ENCODE measurements at regions of chr1 and their contacts with region 1.

Region 1: DNA sequence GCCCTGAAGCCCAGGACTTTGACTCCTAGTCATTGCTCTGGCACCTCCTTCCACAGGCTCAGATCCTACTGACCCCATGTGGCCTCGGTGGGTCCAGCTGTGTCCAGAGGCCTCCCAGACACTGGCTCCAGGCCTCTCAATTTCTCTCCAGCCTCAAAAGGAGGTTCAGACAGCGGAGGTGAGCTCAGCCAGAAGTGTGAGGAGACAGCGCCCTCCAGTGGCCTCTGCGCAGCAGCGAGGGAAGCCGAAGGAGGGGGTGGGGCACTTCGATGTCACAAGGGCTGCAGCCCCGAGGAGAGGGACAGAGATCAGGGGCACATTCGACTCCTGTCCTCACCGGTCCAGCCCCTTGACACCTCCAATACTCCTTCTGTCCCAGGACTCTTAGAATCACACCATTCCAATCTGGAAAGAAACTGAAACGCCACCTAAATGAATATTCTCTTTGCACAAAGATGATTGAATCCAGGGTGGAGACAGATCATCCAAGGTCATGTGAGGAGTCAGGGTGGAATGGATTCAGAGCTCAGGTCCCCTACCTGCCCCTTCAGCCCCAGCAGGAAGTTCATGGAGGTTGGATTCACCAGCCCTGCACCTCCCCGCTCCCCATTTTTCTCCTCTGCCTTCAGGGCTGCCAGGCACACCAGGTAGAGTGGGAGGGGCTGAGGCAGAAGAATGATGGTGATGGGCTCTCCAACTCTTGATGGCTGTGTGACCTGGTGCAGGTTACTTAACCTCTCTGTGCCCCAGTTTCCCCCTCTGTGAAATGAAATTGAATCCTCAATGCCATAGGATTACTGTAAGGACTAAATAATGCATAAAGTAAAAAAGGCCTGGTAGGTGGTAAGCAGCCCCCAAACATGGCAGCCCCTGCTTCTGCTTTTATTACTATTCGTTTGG is 34.8 kb upstream of the ZBTB40 start:
- H3K4me3 Mint-ChIP-seq: no peak overlapping the region
- H3K27ac Mint-ChIP-seq: no peak overlapping the region
- H3K4me1 Mint-ChIP-seq: no peaks in the 10 kb centered on the region
- H3K27me3 Mint-ChIP-seq: peaks cover 37% of the 10 kb centered on the region

Region 2: DNA sequence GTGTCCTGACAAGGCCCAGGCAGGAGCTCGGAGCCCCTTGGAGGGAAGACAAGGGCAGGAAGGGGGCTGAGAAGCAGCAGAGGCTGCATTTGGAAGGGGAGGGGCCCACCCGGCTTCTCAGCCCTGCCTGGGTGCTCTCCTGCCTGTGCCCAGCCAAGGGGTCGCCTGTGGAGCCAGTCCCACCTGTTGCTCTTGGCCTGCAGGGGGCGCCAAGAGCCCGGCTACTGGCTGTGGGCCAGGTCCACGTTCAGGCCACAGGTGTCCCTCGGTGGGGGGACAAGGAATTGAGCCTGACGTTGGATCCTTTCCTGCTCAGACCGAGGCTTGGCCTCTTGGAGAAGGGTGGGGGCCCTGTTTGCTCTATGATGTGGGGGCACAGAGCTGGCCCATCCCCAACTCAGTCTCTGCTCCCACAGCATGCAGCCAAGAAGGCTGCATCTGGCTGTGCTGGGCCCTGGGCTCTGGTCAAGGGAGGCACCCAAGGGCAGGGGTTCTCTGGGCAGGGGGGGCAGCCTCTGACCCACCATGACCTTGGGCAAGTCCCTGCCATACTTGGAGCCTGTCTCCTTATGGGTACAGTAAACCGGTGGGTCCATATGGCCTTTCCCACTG is 284.8 kb before region 1 on chr1:
- intact Hi-C with region 1: loop called (anchors 2 kb)
- H3K4me3 Mint-ChIP-seq: no peak overlapping the region
- H3K27ac Mint-ChIP-seq: no peak overlapping the region
- H3K4me1 Mint-ChIP-seq: no peaks in the 10 kb centered on the region
- H3K27me3 Mint-ChIP-seq: peaks cover 20% of the 10 kb centered on the region

Region 3: DNA sequence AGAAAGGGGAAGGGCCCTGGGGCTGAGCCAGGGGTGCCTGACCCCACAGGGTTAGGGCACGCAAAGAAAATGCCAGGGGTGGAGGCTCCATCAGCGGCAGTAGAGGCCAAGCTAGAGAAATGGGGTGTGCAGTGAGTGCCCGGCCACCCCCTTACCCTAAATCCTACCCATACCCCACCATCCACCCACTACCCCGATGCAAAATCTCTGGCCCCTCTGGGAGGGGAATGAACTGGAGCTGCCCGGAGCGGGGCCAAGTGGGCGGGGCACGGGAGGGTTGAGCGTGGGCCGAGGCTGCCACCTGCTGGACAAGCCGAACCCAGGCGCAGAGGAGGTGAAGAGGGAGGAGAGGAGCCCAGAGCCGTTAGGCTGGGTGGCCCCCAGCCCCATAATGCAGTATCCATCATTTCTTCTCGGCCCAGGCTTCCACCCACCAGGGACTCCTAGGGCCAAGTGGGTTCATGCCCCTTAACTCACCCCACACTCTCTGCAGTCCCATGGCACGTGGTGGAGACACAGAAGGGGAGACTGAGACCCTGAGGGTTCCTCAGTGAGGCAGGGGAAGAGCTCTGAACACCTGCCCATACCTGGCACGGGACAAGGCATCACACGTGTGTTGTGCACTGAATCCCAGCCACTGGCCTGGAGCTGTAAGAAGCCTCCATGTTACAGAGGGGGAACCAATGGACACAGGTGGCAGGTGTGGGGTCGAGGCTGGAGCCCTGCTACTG is 225.3 kb after region 1 on chr1:
- intact Hi-C with region 1: loop called (anchors 1 kb)
- H3K4me3 Mint-ChIP-seq: peak overlapping the region; percentile 4
- H3K27ac Mint-ChIP-seq: peak overlapping the region; percentile 85
- H3K4me1 Mint-ChIP-seq: peaks cover 85% of the 10 kb centered on the region
- H3K27me3 Mint-ChIP-seq: peaks cover 10% of the 10 kb centered on the region